ENCODE measurements at regions of chr7 and their contacts with region 1.

Region 1: GRCh38 chr7:37820708-37821468 is 27.5 kb upstream of the NME8 start:
- DNase-seq: no peak

Region 2: GRCh38 chr7:37633048-37633447 is 187.8 kb before region 1 on chr7:
- intact Hi-C with region 1: loop called in 1 of 2 experiments (anchors 10 kb)
- DNase-seq: no peak

Region 3: GRCh38 chr7:37806152-37806551 is 14.7 kb before region 1 on chr7:
- intact Hi-C with region 1: no loop called
- DNase-seq: no peak

Region 4: GRCh38 chr7:38142736-38143135 is 321.8 kb after region 1 on chr7:
- intact Hi-C with region 1: no loop called
- DNase-seq: no peak